Right ventricle myocardium inferior (tissue), 1 donor: ENCODE measurements at regions of chr5 and their contacts with region 1.

Region 1: DNA sequence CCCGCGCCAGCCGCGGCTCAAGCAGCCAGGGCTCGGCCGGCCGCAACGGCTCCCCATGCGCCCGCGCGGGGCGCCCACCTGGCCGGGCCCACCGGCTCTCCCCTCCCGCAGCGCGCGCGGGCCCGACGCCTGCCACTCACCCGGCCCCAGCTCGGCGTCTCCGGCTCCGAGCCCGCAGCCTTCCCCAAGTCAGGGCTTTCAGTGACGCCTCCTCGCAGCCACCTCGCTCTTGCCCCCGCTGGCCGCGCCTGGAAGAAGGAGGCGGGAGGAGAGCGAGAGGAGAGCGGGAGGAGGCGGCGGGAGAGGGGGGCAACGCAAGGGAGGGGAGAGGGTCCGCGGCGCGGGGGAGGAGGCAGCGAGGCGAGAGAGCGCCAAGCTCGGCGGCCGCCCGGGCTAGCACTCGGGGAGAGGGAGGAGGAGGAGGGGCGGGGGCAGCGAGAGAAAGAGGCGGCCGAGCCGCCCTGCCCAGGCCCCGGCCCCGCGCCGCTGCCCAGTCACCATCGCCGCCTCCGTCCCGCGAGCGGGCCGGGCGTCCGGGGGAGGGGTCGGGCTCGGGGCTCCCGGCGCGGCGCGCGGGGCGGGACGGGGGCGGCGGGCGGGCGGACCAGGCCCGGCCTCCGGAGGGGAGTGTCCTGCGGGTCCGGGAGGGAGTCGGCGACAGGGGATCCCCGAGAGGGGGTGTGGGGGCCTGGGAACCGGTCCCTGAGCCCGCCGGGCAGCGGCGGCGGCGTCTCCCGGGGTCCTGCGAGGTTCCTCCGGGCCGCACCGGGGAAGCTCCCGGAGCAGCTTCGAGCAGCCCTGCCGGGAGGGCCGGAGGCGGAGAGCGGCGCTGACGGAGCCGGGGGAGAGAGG is at the start of gene LHFPL2:
- DNase-seq: peak; percentile 91
- ATAC-seq: peak; percentile 91
- total RNA-seq, gene LHFPL2: 6.0 TPM

Region 2: DNA sequence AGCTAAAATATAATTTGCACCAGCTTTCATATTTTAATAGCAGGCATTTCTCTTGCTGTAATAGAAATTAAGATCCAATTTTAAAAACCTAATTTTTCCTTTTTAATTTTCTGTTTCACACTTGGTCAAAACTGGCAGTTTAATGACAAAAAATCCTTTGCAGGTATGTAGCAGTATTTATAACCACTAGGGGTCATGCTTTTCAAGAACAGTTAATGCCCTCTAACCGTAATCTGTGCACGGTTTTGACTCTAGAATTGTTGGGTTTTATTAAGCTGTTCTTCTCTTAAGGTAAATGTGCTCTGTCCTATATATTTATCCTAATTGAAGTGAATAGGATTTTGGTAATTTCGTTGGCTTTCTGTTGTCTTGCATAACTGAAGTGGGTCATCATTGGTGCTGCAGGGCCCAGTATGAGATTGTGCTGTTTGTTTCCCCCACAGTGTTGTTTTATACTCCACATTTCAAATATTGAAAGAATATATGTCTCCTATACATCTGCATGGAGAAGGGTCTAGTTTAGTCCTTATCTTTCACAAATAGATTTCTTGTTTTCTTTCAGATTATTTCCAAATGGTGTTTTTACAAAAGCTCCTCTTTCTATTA is 180.7 kb before region 1 on chr5:
- intact Hi-C with region 1: loop called (anchors 5 kb)
- DNase-seq: no peak
- ATAC-seq: peak; percentile 54